CD4-positive, alpha-beta memory T cell (primary cell): ENCODE measurements at regions of chrX and their contacts with region 1.

Region 1: GRCh38 chrX:3651276-3651675 is 62.2 kb downstream of the PRKX start:
- DNase-seq: peak in 4 of 5 donors; percentile 28 to 40 (median 37)
- H3K4me3 ChIP-seq: no peak overlapping the region
- H3K4me3 Mint-ChIP-seq: no peak overlapping the region
- H3K27ac ChIP-seq: no peak overlapping the region
- H3K27ac Mint-ChIP-seq: peak overlapping the region in 2 of 7 donors; percentile 30 to 76
- H3K4me1 ChIP-seq: no peaks in the 10 kb centered on the region
- H3K4me1 Mint-ChIP-seq: peaks cover 0 to 9% (median 6%) of the 10 kb centered on the region in 4 donors
- H3K27me3 ChIP-seq: no peaks in the 10 kb centered on the region
- H3K27me3 Mint-ChIP-seq: no peaks in the 10 kb centered on the region

Region 2: DNA sequence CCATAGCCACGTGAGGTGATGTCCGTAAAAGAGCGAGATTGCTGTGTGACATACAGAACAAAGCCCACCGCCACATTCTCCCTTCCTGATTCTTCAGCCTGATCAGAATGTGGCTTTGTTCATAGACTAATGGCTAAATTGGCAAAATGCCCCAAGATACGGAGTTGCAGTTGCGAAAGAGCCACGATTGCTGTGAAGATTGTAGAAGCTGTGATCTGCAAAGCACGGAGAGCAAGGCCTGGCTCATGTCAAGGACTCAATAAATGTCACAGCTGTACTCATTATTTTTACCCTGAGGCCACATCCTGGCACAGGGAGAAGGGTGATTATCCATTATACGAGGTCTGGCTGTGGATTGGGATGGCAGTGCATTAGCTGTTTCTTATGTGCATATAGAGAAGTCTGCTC is 756.4 kb before region 1 on chrX:
- CTCF ChIA-PET with region 1: no interaction called
- POLR2A ChIA-PET with region 1: no interaction called
- intact Hi-C with region 1: no loop called
- DNase-seq: no peak
- H3K4me3 ChIP-seq: no peak overlapping the region
- H3K4me3 Mint-ChIP-seq: no peak overlapping the region
- H3K27ac ChIP-seq: no peak overlapping the region
- H3K27ac Mint-ChIP-seq: no peak overlapping the region
- H3K4me1 ChIP-seq: no peaks in the 10 kb centered on the region
- H3K4me1 Mint-ChIP-seq: peaks cover 0 to 20% (median 4%) of the 10 kb centered on the region in 4 donors
- H3K27me3 ChIP-seq: no peaks in the 10 kb centered on the region
- H3K27me3 Mint-ChIP-seq: peaks cover 0 to 1% of the 10 kb centered on the region in 2 donors

Region 3: GRCh38 chrX:3501833-3502535 is 149.3 kb before region 1 on chrX:
- CTCF ChIA-PET with region 1: no interaction called
- POLR2A ChIA-PET with region 1: no interaction called
- intact Hi-C with region 1: no loop called
- DNase-seq: no peak
- H3K4me3 ChIP-seq: no peak overlapping the region
- H3K4me3 Mint-ChIP-seq: no peak overlapping the region
- H3K27ac ChIP-seq: no peak overlapping the region
- H3K27ac Mint-ChIP-seq: no peak overlapping the region
- H3K4me1 ChIP-seq: no peaks in the 10 kb centered on the region
- H3K4me1 Mint-ChIP-seq: no peaks in the 10 kb centered on the region
- H3K27me3 ChIP-seq: no peaks in the 10 kb centered on the region
- H3K27me3 Mint-ChIP-seq: peaks cover 0 to 1% of the 10 kb centered on the region in 2 donors

Region 4: DNA sequence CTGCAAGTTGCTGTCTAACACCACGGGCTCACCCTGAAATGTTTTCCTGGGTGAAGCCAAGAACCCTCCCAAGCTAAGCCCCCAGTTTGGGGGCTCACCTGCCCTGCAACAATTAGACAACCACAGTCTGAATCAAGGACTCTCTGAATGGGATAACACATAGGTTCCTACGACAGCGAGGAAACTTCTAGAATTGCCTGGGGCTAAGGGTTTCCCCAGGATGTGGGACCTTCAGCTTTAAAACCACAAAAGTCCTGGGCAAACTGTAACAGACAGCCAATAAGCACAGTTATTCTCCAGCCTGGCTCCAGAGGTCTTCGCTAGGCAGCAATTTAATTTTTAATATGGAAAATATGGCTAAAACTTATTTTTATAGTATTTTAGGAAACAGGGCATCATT is 100.4 kb before region 1 on chrX:
- CTCF ChIA-PET with region 1: no interaction called
- POLR2A ChIA-PET with region 1: no interaction called
- intact Hi-C with region 1: no loop called
- DNase-seq: no peak
- H3K4me3 ChIP-seq: no peak overlapping the region
- H3K4me3 Mint-ChIP-seq: no peak overlapping the region
- H3K27ac ChIP-seq: no peak overlapping the region
- H3K27ac Mint-ChIP-seq: no peak overlapping the region
- H3K4me1 ChIP-seq: no peaks in the 10 kb centered on the region
- H3K4me1 Mint-ChIP-seq: peaks cover 0 to 2% (median 0%) of the 10 kb centered on the region in 4 donors
- H3K27me3 ChIP-seq: no peaks in the 10 kb centered on the region
- H3K27me3 Mint-ChIP-seq: peaks cover 0 to 2% of the 10 kb centered on the region in 2 donors

Region 5: GRCh38 chrX:3697701-3698279 is 46.5 kb after region 1 on chrX:
- CTCF ChIA-PET with region 1: interaction called, 6 read pairs
- POLR2A ChIA-PET with region 1: no interaction called
- intact Hi-C with region 1: loop called (anchors 2 kb)
- DNase-seq: no peak
- H3K4me3 ChIP-seq: no peak overlapping the region
- H3K4me3 Mint-ChIP-seq: peak overlapping the region in 3 of 8 donors; percentile 29 to 53 (median 41)
- H3K27ac ChIP-seq: no peak overlapping the region
- H3K27ac Mint-ChIP-seq: peak overlapping the region in 4 of 7 donors; percentile 46 to 57 (median 55)
- H3K4me1 ChIP-seq: peaks cover 48% of the 10 kb centered on the region
- H3K4me1 Mint-ChIP-seq: peaks cover 36 to 87% (median 56%) of the 10 kb centered on the region in 4 donors
- H3K27me3 ChIP-seq: no peaks in the 10 kb centered on the region
- H3K27me3 Mint-ChIP-seq: no peaks in the 10 kb centered on the region

Region 6: GRCh38 chrX:3713225-3713936 is 62.1 kb after region 1 on chrX and contains the start of gene PRKX:
- CTCF ChIA-PET with region 1: interaction called, 6 read pairs
- POLR2A ChIA-PET with region 1: no interaction called
- intact Hi-C with region 1: loop called (anchors 2 kb)
- DNase-seq: peak; percentile 74 to 88 (median 83)
- H3K4me3 ChIP-seq: peak within 1 kb of the TSS; percentile 77 to 78
- H3K4me3 Mint-ChIP-seq: peak within 1 kb of the TSS; percentile 96 to 100 (median 98)
- H3K27ac ChIP-seq: peak within 1 kb of the TSS; percentile 60
- H3K27ac Mint-ChIP-seq: peak within 1 kb of the TSS; percentile 88 to 98 (median 97)
- H3K4me1 ChIP-seq: peaks cover 27% of the 10 kb centered on the region
- H3K4me1 Mint-ChIP-seq: peaks cover 4 to 39% (median 20%) of the 10 kb centered on the region in 4 donors
- H3K27me3 ChIP-seq: no peaks in the 10 kb centered on the region
- H3K27me3 Mint-ChIP-seq: no peaks in the 10 kb centered on the region
- total RNA-seq, gene PRKX: 66.7 to 70.2 TPM

Region 7: GRCh38 chrX:3757510-3758025 is 106.3 kb after region 1 on chrX:
- CTCF ChIA-PET with region 1: no interaction called
- POLR2A ChIA-PET with region 1: no interaction called
- intact Hi-C with region 1: no loop called
- DNase-seq: no peak
- H3K4me3 ChIP-seq: no peak overlapping the region
- H3K4me3 Mint-ChIP-seq: no peak overlapping the region
- H3K27ac ChIP-seq: no peak overlapping the region
- H3K27ac Mint-ChIP-seq: peak overlapping the region in 1 of 7 donors; percentile 18
- H3K4me1 ChIP-seq: peaks cover 3% of the 10 kb centered on the region
- H3K4me1 Mint-ChIP-seq: peaks cover 0 to 3% (median 0%) of the 10 kb centered on the region in 4 donors
- H3K27me3 ChIP-seq: no peaks in the 10 kb centered on the region
- H3K27me3 Mint-ChIP-seq: no peaks in the 10 kb centered on the region

Region 8: GRCh38 chrX:3788509-3789233 is 137.4 kb after region 1 on chrX:
- CTCF ChIA-PET with region 1: interaction called, 5 read pairs
- POLR2A ChIA-PET with region 1: no interaction called
- intact Hi-C with region 1: loop called (anchors 2 kb)
- DNase-seq: peak; percentile 21 to 31 (median 28)
- H3K4me3 ChIP-seq: no peak overlapping the region
- H3K4me3 Mint-ChIP-seq: peak overlapping the region in 1 of 8 donors; percentile 1
- H3K27ac ChIP-seq: no peak overlapping the region
- H3K27ac Mint-ChIP-seq: peak overlapping the region in 3 of 7 donors; percentile 37 to 45 (median 44)
- H3K4me1 ChIP-seq: no peaks in the 10 kb centered on the region
- H3K4me1 Mint-ChIP-seq: peaks cover 5 to 18% (median 7%) of the 10 kb centered on the region in 4 donors
- H3K27me3 ChIP-seq: no peaks in the 10 kb centered on the region
- H3K27me3 Mint-ChIP-seq: no peaks in the 10 kb centered on the region

Region 9: DNA sequence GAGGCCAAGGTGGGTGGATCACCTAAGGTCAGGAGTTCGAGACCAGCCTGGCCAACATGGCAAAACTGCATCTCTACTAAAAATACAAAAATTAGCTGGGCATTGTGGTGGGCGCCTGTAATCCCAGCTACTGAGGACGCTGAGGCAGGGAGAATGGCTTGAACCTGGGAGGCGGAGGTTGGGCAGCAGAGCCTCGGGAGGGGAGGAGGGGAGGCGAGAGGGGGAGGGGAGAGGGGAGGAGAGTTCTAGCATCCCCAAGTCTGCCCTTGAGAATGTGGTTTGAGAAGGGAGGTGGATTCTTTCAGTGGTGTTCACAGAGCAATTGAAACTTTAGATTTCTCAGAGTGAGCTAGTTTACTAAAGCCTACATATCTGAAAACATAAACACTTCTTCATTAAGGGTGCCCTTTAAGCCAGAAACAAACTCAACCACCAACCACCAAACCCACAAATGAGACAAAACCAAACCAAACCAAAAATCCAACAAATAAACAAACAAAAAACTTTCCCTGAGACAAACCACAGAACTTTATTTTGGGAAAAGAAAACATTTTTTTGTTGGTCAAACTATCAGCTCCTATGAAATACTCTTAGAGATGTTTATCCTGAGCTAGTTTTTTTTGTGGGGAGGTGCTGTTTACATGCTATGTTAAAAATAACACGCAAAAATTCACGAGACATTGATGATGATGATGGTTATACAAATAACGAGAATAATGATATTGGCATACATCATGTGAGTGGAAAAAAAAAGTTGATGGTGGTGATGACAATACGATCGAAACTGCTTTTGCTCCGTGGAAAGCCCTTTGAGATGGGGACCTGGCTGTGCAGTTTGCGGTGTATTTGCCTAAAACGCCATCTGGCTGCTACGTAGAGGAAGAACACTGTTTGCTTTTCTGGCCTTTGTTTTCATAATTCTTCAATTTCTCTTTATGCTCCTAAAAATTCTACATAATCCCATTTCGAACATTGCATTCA is 160.3 kb after region 1 on chrX:
- CTCF ChIA-PET with region 1: interaction called, 28 read pairs
- POLR2A ChIA-PET with region 1: interaction called, 3 read pairs
- intact Hi-C with region 1: loop called (anchors 1 kb)
- DNase-seq: peak; percentile 48 to 75 (median 70)
- H3K4me3 ChIP-seq: no peak overlapping the region
- H3K4me3 Mint-ChIP-seq: peak overlapping the region; percentile 21 to 83 (median 75)
- H3K27ac ChIP-seq: no peak overlapping the region
- H3K27ac Mint-ChIP-seq: peak overlapping the region; percentile 33 to 87 (median 54)
- H3K4me1 ChIP-seq: peaks cover 12% of the 10 kb centered on the region
- H3K4me1 Mint-ChIP-seq: peaks cover 5 to 34% (median 16%) of the 10 kb centered on the region in 4 donors
- H3K27me3 ChIP-seq: no peaks in the 10 kb centered on the region
- H3K27me3 Mint-ChIP-seq: peaks cover 2 to 6% of the 10 kb centered on the region in 2 donors